ENCODE measurements at regions of chr22 and their contacts with region 1.

Region 1: DNA sequence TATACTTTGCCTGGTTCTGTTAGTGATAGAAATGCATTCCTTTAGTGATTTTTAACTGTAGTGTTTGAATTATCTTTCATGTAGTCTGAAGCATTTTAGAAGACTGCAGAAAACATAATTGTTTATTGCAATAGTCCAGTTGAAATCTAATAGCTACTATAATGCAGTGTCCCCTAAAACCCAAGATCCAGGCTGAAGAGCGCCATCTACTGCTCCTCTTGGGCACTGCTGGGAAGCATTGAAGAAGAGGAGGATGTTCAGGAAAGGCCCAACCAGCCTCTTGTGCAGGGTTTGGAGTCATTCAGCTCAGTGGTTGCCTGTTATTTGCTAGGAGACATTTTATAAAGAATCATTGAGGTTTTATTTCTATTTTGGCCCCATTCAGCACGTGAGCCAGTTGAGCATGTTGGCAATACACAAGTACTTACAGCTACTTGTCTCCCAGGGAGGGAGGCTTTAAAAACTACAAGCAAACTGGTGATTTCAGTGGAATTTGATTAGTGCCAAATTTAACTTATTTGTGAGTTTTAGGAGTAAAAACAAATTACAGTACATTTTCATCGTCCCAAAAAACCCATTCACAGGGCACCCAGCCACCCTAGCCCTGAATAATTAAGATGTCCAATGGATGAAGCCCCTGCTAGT is 74.9 kb upstream of the HORMAD2 start:
- DNase-seq: peak; percentile 53 to 70 (median 68)
- ATAC-seq: peak; percentile 83
- H3K4me3 ChIP-seq: no peak overlapping the region
- H3K27ac ChIP-seq: no peak overlapping the region
- H3K4me1 ChIP-seq: no peaks in the 10 kb centered on the region
- H3K27me3 ChIP-seq: no peaks in the 10 kb centered on the region
- CTCF ChIP-seq: peak; percentile 72 to 85 (median 85)
- EP300 ChIP-seq: no peak
- POLR2A ChIP-seq: no peak
- RAD21 ChIP-seq: peak; percentile 73 to 85

Region 2: DNA sequence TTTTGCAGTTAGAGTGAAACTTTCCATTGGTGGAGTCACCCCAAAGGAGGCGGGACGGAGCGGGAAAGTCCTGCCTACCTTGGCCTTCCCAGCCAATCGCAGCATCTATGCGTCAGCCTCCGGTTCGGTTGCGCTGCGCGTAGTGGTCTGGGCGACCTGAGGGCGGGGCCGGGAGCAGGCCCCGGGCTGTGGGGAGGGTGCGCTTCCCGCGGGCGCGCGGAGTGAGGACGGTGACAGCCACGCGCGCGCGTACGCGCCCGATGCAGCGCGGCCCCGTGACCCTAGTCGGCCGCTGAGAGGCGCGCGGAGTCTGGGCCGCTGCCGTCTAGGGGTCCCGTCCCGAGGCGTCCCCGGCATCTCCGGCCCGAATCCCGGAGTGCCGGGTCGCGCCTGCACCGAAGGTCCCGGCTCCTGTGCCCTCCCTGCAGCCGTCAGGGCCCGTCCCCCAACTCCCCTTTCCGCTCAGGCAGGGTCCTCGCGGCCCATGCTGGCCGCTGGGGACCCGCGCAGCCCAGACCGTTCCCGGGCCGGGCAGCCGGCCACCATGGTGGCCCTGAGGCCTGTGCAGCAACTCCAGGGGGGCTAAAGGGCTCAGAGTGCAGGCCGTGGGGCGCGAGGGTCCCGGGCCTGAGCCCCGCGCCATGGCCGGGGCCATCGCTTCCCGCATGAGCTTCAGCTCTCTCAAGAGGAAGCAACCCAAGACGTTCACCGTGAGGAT is 401.8 kb before region 1 on chr22 and contains the start of gene NF2:
- CTCF ChIA-PET with region 1: no interaction called
- POLR2A ChIA-PET with region 1: no interaction called
- in situ Hi-C with region 1: no loop called
- intact Hi-C with region 1: no loop called
- DNase-seq: peak; percentile 95 to 98 (median 96)
- ATAC-seq: peak; percentile 99
- H3K4me3 ChIP-seq: peak within 1 kb of the TSS; percentile 86
- H3K27ac ChIP-seq: peak within 1 kb of the TSS; percentile 84
- H3K4me1 ChIP-seq: peaks cover 5 to 15% of the 10 kb centered on the region in 2 experiments; a peak in 2 of 5 replicates
- H3K27me3 ChIP-seq: no peaks in the 10 kb centered on the region
- CTCF ChIP-seq: 0 out of 6 replicates have a peak, but pooled peaks of 1 of the 3 experiments have one; percentile 2
- EP300 ChIP-seq: no peak
- POLR2A ChIP-seq: peak; percentile 75
- RAD21 ChIP-seq: no peak
- polyA plus RNA-seq, gene NF2: 2.2 to 2.8 TPM

Region 3: DNA sequence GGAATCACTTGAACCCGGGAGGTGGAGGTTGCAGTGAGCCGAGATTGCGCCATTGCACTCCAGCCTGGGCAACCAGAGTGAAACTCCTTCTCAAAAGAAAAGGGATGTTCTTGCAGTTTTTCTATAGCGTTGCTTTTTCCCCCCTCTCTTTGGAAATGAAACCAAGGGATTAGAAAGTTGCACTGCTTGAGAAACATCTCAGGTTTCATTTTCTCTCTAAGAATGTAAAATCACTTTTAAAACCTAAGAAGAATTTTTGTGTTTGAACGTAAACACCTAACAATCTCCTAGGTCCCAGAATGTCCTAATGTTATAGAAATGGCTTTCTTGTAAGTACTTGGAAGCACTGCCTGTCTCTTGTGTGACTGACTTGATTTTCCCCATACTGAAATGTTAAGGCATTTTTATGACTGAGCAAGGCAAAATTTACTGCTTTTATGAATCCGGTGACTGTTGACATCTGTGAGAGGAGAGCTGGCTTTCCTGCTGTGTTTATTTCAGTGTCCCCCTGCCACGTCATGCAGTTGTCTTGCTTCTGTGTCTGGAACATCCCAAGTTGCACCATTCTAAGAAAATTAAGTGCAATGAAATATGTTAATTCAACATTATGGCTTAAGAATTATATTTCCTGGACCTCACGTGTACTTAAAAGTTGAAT is 364.2 kb before region 1 on chr22:
- CTCF ChIA-PET with region 1: no interaction called
- POLR2A ChIA-PET with region 1: no interaction called
- in situ Hi-C with region 1: loop called (anchors 10 kb)
- intact Hi-C with region 1: no loop called
- DNase-seq: no peak
- ATAC-seq: no peak
- H3K4me3 ChIP-seq: no peak overlapping the region
- H3K27ac ChIP-seq: no peak overlapping the region
- H3K4me1 ChIP-seq: no peaks in the 10 kb centered on the region
- H3K27me3 ChIP-seq: no peaks in the 10 kb centered on the region
- CTCF ChIP-seq: no peak
- EP300 ChIP-seq: no peak
- POLR2A ChIP-seq: no peak
- RAD21 ChIP-seq: no peak

Region 4: GRCh38 chr22:29727131-29727523 is 278.2 kb before region 1 on chr22:
- CTCF ChIA-PET with region 1: interaction called, 3 read pairs
- POLR2A ChIA-PET with region 1: no interaction called
- in situ Hi-C with region 1: no loop called
- intact Hi-C with region 1: loop called (anchors 5 kb)
- DNase-seq: peak; percentile 71 to 89 (median 81)
- ATAC-seq: peak; percentile 85
- H3K4me3 ChIP-seq: no peak overlapping the region
- H3K27ac ChIP-seq: no peak overlapping the region
- H3K4me1 ChIP-seq: peaks cover 14 to 42% of the 10 kb centered on the region in 2 experiments; a peak in 4 of 5 replicates
- H3K27me3 ChIP-seq: no peaks in the 10 kb centered on the region
- CTCF ChIP-seq: peak; percentile 28 to 62 (median 50); a peak in 5 of 6 replicates
- EP300 ChIP-seq: no peak
- POLR2A ChIP-seq: no peak
- RAD21 ChIP-seq: peak; percentile 14 to 54; a peak in 2 of 4 replicates

Region 5: GRCh38 chr22:29772170-29772641 is 233.1 kb before region 1 on chr22:
- CTCF ChIA-PET with region 1: interaction called, 6 read pairs
- POLR2A ChIA-PET with region 1: no interaction called
- in situ Hi-C with region 1: no loop called
- intact Hi-C with region 1: loop called (anchors 1 kb)
- DNase-seq: peak in 2 of 4 experiments; percentile 19 to 48
- ATAC-seq: peak; percentile 83
- H3K4me3 ChIP-seq: no peak overlapping the region
- H3K27ac ChIP-seq: no peak overlapping the region
- H3K4me1 ChIP-seq: peaks cover 2 to 3% of the 10 kb centered on the region in 2 experiments; a peak in 2 of 5 replicates
- H3K27me3 ChIP-seq: no peaks in the 10 kb centered on the region
- CTCF ChIP-seq: peak; percentile 51 to 58 (median 52)
- EP300 ChIP-seq: no peak
- POLR2A ChIP-seq: no peak
- RAD21 ChIP-seq: peak in 1 of 2 experiments; percentile 61; a peak in 2 of 4 replicates

Region 6: GRCh38 chr22:29813563-29813962 is 191.8 kb before region 1 on chr22:
- CTCF ChIA-PET with region 1: no interaction called
- POLR2A ChIA-PET with region 1: no interaction called
- in situ Hi-C with region 1: loop called (anchors 10 kb)
- intact Hi-C with region 1: no loop called
- DNase-seq: peak; percentile 59 to 68 (median 63)
- ATAC-seq: peak; percentile 94
- H3K4me3 ChIP-seq: no peak overlapping the region
- H3K27ac ChIP-seq: no peak overlapping the region
- H3K4me1 ChIP-seq: no peaks in the 10 kb centered on the region
- H3K27me3 ChIP-seq: no peaks in the 10 kb centered on the region
- CTCF ChIP-seq: peak; percentile 28 to 54 (median 49); a peak in 3 of 6 replicates
- EP300 ChIP-seq: no peak
- POLR2A ChIP-seq: no peak
- RAD21 ChIP-seq: peak in 1 of 2 experiments; percentile 26; a peak in 2 of 4 replicates

Region 7: DNA sequence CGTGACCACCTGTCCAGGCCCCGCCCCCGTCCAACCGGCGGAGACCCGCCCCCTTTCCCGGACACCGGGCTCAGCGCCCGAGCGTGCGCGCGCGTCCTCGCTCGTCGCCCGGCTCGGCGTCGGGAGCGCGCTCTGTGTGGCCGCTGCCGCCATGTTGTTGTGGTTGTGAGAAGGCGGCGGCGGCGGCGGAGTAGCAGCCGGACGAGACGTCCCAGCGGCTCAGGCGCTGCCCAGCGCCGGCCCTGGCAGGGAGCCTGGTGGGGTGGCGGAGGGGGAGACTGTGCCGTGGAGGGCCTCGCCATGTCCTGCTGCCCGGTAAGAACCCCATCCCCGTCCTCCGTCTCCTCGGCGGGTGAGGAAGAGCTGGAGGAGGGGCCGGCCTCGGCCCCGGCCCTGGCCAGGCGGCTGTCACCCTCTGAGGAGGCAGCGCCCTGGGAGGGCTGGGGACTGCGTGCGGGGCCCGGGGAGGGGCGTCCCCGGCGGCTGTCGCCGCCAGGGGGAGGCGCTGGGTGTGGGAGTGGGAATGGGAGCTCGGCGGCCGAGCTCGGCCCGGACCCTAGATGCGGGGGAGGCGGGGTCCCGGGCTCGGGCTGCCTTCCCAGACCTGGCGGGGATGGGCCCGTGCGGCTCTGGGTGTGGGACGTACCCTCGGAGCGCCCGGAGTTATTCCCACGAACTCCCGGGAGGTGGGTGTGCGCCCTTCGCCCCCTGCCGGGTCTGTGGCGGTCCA is 122.1 kb before region 1 on chr22 and contains the start of gene MTMR3:
- CTCF ChIA-PET with region 1: no interaction called
- POLR2A ChIA-PET with region 1: no interaction called
- in situ Hi-C with region 1: no loop called
- intact Hi-C with region 1: loop called (anchors 5 kb)
- DNase-seq: peak; percentile 78 to 90 (median 79)
- ATAC-seq: peak; percentile 97
- H3K4me3 ChIP-seq: peak within 1 kb of the TSS; percentile 93
- H3K27ac ChIP-seq: peak within 1 kb of the TSS; percentile 91
- H3K4me1 ChIP-seq: peaks cover 0 to 5% of the 10 kb centered on the region in 2 experiments; a peak in 2 of 5 replicates
- H3K27me3 ChIP-seq: no peaks in the 10 kb centered on the region
- CTCF ChIP-seq: peak in 2 of 3 experiments; percentile 43 to 44; a peak in 4 of 6 replicates
- EP300 ChIP-seq: 0 out of 2 replicates have a peak, but pooled peaks have one; percentile 3
- POLR2A ChIP-seq: peak; percentile 81
- RAD21 ChIP-seq: peak; percentile 30 to 37; a peak in 3 of 4 replicates
- polyA plus RNA-seq, gene MTMR3: 1.6 to 1.9 TPM

Region 8: GRCh38 chr22:30089655-30089974 is 84.3 kb after region 1 on chr22:
- CTCF ChIA-PET with region 1: no interaction called
- POLR2A ChIA-PET with region 1: no interaction called
- in situ Hi-C with region 1: no loop called
- intact Hi-C with region 1: no loop called
- DNase-seq: no peak
- ATAC-seq: no peak
- H3K4me3 ChIP-seq: no peak overlapping the region
- H3K27ac ChIP-seq: no peak overlapping the region
- H3K4me1 ChIP-seq: no peaks in the 10 kb centered on the region; a peak in 1 of 5 replicates
- H3K27me3 ChIP-seq: no peaks in the 10 kb centered on the region
- CTCF ChIP-seq: no peak
- EP300 ChIP-seq: no peak
- POLR2A ChIP-seq: no peak
- RAD21 ChIP-seq: no peak

Region 9: DNA sequence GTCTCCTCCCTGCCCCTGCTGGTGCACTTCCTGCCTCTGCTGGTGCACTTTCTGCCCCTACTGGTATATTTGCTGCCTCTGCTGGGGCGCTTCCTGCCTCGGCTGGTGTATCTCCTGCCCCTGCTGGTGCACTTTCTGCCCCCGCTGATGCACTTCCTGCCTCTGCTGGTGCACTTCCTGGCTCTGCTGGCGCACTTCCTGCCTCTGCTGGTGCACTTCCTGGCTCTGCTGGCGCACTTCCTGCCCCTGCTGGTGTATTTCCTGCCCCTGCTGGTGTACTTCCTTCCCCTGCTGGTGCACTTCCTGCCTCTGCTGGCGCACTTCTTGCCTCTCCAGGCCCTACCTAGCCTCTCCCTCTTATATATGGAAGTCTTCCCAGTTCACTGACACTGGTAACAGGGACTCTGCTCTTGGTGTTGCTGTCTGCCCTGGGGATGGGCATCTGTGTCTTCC is 430.4 kb after region 1 on chr22:
- CTCF ChIA-PET with region 1: no interaction called
- POLR2A ChIA-PET with region 1: no interaction called
- in situ Hi-C with region 1: no loop called
- intact Hi-C with region 1: no loop called
- DNase-seq: peak in 2 of 4 experiments; percentile 25 to 28
- ATAC-seq: peak; percentile 30; the same call in 1 of the 3 replicates
- H3K4me3 ChIP-seq: no peak overlapping the region
- H3K27ac ChIP-seq: peak overlapping the region; percentile 65
- H3K4me1 ChIP-seq: peaks cover 21 to 28% of the 10 kb centered on the region in 2 experiments
- H3K27me3 ChIP-seq: no peaks in the 10 kb centered on the region
- CTCF ChIP-seq: peak in 2 of 3 experiments; percentile 23 to 56; a peak in 2 of 6 replicates
- EP300 ChIP-seq: no peak
- POLR2A ChIP-seq: no peak
- RAD21 ChIP-seq: no peak

Measured in K562 (cell line).